Thyroid gland (tissue), 4 donors: ENCODE measurements at regions of chr11 and their contacts with region 1.

Region 1: DNA sequence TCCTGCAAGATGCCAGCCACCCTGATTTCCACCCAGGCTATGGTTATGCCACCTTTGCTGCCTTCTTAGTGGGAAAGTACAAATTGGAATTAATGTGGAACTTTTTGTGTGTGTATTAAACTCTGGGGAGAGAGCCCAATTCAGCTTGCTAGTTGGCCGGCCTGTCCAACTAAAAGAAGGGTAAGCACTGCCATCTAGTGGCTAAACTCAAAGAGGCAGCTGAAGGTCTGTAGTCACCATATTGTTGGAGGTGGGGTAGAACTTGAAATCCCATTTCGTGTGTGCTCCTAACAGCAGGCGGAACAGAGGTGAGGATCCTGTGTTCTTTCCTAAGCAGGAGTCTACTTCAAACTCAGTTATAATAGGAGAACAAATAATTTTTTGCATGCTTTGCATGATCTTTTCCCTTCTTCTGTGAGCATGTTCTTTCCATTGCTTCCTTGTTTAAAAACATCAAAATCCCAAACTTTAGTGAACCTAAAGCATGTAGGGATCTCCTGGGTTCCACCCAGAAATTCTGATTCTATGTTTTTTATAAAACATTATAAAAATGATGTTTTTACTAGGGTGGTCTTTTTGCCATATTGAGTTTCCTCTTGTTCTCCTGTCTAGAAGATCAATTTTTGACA is 138.8 kb upstream of the SORL1-AS1 start:
- DNase-seq: peak; percentile 65 to 66
- H3K4me3 ChIP-seq: no peak overlapping the region
- H3K27ac ChIP-seq: no peak overlapping the region
- H3K4me1 ChIP-seq: peaks cover 0 to 4% of the 10 kb centered on the region in 2 donors
- H3K27me3 ChIP-seq: no peaks in the 10 kb centered on the region
- CTCF ChIP-seq: peak; percentile 66 to 89 (median 80)
- POLR2A ChIP-seq: no peak

Region 2: GRCh38 chr11:121318848-121319834 is 272.4 kb before region 1 on chr11:
- intact Hi-C with region 1: loop called (anchors 5 kb)
- DNase-seq: peak; percentile 6 to 7
- H3K4me3 ChIP-seq: no peak overlapping the region
- H3K27ac ChIP-seq: no peak overlapping the region
- H3K4me1 ChIP-seq: no peaks in the 10 kb centered on the region
- H3K27me3 ChIP-seq: no peaks in the 10 kb centered on the region
- CTCF ChIP-seq: peak in 5 of 6 experiments; percentile 25 to 87 (median 75)
- POLR2A ChIP-seq: no peak

Region 3: DNA sequence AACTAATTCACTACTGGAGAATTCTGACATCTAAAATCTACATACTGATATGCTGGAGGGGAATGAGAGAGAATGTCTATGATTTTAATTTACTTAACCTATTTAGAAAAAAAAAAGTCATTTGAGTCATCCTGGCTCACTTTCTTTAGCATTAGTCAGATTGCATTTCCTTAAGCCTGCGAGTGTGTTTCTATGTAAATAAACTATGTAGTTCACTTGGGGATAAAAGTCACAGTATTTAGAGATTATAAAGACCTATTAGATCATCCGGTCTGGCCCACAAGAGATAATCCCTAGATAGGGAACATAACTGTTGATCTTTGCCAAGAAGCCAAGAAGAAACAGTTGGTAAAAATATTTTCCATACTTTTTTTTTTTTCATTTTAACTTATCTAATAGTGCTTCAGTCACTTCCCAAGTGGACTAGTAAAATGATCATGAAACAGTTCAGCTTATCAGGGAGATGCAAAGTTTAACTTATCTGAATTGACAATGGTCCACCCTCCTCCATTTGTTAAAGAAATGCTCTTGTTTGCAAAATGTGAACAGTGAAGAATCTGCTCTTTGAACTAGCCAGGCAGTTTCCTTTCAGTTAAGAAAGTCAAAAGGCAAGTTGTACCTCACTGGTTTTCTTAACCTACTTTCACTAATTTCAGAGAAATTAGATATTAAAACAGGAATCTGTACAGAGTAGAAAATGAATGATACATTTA is 545.7 kb after region 1 on chr11:
- intact Hi-C with region 1: no loop called
- DNase-seq: no peak
- H3K4me3 ChIP-seq: no peak overlapping the region
- H3K27ac ChIP-seq: no peak overlapping the region
- H3K4me1 ChIP-seq: peaks cover 14 to 22% of the 10 kb centered on the region in 2 donors
- H3K27me3 ChIP-seq: no peaks in the 10 kb centered on the region
- CTCF ChIP-seq: no peak
- POLR2A ChIP-seq: no peak